ENCODE measurements at regions of chr3 and their contacts with region 1.

Region 1: DNA sequence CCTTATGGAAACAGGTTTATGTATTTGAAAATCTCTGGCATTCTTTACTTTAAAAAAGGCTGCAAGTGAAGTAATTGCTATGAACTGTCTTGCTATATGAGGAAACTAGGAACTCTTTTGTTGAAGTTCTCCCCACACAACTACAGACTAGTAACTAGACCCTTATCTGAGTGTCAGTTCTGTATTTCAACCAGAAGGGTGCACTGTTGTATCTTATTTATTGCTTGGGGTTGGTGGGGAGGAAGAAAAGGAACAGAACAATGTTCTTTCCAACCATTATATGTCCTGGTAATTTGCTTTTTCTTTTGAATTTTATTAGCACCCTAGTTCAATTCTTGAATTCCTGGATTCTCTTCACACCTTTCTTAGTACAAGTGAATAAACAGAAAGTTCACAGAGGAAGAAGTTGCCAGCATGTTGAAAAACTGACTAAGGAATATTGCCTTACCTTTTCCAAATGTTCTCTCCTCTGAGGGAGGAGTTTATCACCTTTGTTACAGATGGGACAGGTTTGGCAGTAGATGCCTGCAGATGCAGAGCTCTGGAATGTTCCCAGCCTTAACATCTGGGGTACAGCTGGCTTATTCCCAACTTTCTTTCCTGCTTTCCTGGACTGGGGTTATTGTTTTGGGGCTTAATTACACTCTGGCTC is 162.4 kb upstream of the CFAP20DC start:
- DNase-seq: peak; percentile 50
- ATAC-seq: no peak
- H3K4me3 ChIP-seq: no peak overlapping the region
- H3K4me3 Mint-ChIP-seq: no peak overlapping the region
- H3K27ac ChIP-seq: no peak overlapping the region
- H3K27ac Mint-ChIP-seq: no peak overlapping the region
- H3K4me1 ChIP-seq: no peaks in the 10 kb centered on the region
- H3K4me1 Mint-ChIP-seq: no peaks in the 10 kb centered on the region
- H3K27me3 ChIP-seq: no peaks in the 10 kb centered on the region
- H3K27me3 Mint-ChIP-seq: peaks cover 9% of the 10 kb centered on the region
- CTCF ChIP-seq: peak; percentile 81

Region 2: GRCh38 chr3:58640700-58641372 is 571.4 kb before region 1 on chr3:
- CTCF ChIA-PET with region 1: no interaction called
- POLR2A ChIA-PET with region 1: no interaction called
- intact Hi-C with region 1: loop called (anchors 5 kb)
- DNase-seq: peak; percentile 65
- ATAC-seq: peak; percentile 82
- H3K4me3 ChIP-seq: no peak overlapping the region
- H3K4me3 Mint-ChIP-seq: no peak overlapping the region
- H3K27ac ChIP-seq: no peak overlapping the region
- H3K27ac Mint-ChIP-seq: peak overlapping the region; percentile 20
- H3K4me1 ChIP-seq: peaks cover 0 to 5% of the 10 kb centered on the region in 2 donors
- H3K4me1 Mint-ChIP-seq: peaks cover 10% of the 10 kb centered on the region
- H3K27me3 ChIP-seq: no peaks in the 10 kb centered on the region
- H3K27me3 Mint-ChIP-seq: peaks cover 8% of the 10 kb centered on the region
- CTCF ChIP-seq: peak; percentile 82

Measured in B cell (primary cell).